RWPE1 (cell line): ENCODE measurements at regions of chr14 and their contacts with region 1.

Region 1: GRCh38 chr14:21071225-21072030 is 1.3 kb downstream of the ARHGEF40 start:
- DNase-seq: peak; percentile 42
- H3K27ac ChIP-seq: peak overlapping the region; percentile 83
- CTCF ChIP-seq: no peak

Region 2: GRCh38 chr14:21092273-21093011 is 21.0 kb after region 1 on chr14:
- CTCF ChIA-PET with region 1: interaction called, 21 read pairs
- POLR2A ChIA-PET with region 1: interaction called, 5 read pairs
- DNase-seq: no peak
- H3K27ac ChIP-seq: peak overlapping the region; percentile 32
- CTCF ChIP-seq: peak; percentile 99